ENCODE measurements at regions of chr14 and their contacts with region 1.

Region 1: GRCh38 chr14:22319526-22320361 is 269.3 kb downstream of the DAD1 start:
- DNase-seq: no peak
- H3K4me3 ChIP-seq: no peak overlapping the region
- H3K27ac ChIP-seq: no peak overlapping the region
- H3K4me1 ChIP-seq: no peaks in the 10 kb centered on the region
- H3K27me3 ChIP-seq: no peaks in the 10 kb centered on the region
- CTCF ChIP-seq: peak; percentile 49 to 72 (median 69)
- EP300 ChIP-seq: no peak
- POLR2A ChIP-seq: no peak

Region 2: DNA sequence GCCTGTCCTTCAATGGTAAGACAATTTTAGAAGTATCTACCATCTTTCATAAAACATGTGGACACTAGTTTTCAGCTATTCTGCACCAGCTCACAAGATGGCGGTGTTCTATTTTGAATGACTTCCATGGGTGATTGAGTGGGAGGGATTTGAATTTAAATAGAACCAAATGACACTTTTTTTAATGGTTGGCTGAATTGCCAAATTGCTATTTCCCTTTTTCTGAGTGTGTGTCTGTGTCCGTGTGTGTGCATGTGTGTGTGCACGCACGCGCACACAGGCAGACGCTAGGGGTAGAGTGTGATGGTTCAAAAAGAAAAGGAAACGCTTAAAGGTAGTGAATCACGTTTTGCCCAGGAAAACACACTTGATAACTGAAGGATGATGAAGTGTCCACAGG is 93.4 kb before region 1 on chr14:
- intact Hi-C with region 1: no loop called
- DNase-seq: no peak
- H3K4me3 ChIP-seq: no peak overlapping the region
- H3K27ac ChIP-seq: no peak overlapping the region
- H3K4me1 ChIP-seq: peaks cover 0 to 6% (median 3%) of the 10 kb centered on the region in 4 donors
- H3K27me3 ChIP-seq: no peaks in the 10 kb centered on the region
- CTCF ChIP-seq: no peak
- EP300 ChIP-seq: no peak
- POLR2A ChIP-seq: no peak

Region 3: GRCh38 chr14:22375321-22375930 is 55.7 kb after region 1 on chr14:
- intact Hi-C with region 1: loop called (anchors 5 kb)
- DNase-seq: no peak
- H3K4me3 ChIP-seq: no peak overlapping the region
- H3K27ac ChIP-seq: no peak overlapping the region
- H3K4me1 ChIP-seq: peaks cover 8 to 21% (median 18%) of the 10 kb centered on the region in 4 donors
- H3K27me3 ChIP-seq: no peaks in the 10 kb centered on the region
- CTCF ChIP-seq: peak; percentile 47 to 55 (median 49)
- EP300 ChIP-seq: no peak
- POLR2A ChIP-seq: no peak

Measured in esophagus muscularis mucosa (tissue), 4 donors.